BJ (cell line): ENCODE measurements at regions of chr6 and their contacts with region 1.

Region 1: GRCh38 chr6:122730775-122731386 is 48.6 kb upstream of the FABP7 start:
- DNase-seq: peak; percentile 1
- H3K4me3 ChIP-seq: no peak overlapping the region
- H3K27me3 ChIP-seq: no peaks in the 10 kb centered on the region
- CTCF ChIP-seq: peak; percentile 78

Region 2: DNA sequence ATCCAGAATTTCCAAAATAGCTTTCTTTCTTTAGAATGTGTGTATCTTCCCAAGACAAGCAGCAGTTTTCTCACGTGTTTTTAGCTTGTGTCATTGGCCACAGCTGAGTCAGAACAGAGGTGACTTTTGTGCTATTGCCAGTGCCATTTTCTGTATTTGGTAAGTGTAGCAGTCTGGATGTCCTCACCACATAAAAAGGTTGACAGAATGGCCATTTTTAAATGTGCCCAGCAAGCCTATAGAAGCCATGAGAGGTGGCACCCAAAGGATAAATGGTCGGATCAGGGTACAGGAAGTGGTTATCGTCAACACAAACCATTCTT is 600.9 kb before region 1 on chr6:
- CTCF ChIA-PET with region 1: no interaction called
- POLR2A ChIA-PET with region 1: no interaction called
- DNase-seq: no peak
- H3K4me3 ChIP-seq: no peak overlapping the region
- H3K27me3 ChIP-seq: no peaks in the 10 kb centered on the region
- CTCF ChIP-seq: no peak

Region 3: DNA sequence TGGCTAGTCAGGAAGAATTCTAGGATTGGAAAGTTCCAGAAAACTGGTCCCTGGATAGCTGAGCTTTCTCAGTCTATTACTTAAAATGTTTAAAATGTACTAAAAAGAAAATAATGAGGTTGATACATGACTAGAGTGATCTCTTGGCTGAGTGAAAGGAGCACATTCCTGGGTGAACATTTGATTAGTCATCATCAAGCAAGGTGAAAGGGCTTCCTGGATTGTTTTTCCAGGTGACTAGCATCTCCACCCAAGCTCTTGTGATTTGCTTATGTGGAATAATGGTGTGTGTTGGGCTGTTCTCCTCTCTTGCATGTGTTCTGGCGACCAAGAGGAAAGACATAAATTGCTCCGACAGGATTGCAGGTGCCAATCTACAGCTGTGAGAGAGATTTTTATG is 77.8 kb before region 1 on chr6:
- CTCF ChIA-PET with region 1: no interaction called
- POLR2A ChIA-PET with region 1: no interaction called
- DNase-seq: no peak
- H3K4me3 ChIP-seq: no peak overlapping the region
- H3K27me3 ChIP-seq: no peaks in the 10 kb centered on the region
- CTCF ChIP-seq: no peak

Region 4: GRCh38 chr6:122709922-122710512 is 20.9 kb before region 1 on chr6:
- CTCF ChIA-PET with region 1: interaction called, 16 read pairs
- POLR2A ChIA-PET with region 1: no interaction called
- DNase-seq: no peak
- H3K4me3 ChIP-seq: no peak overlapping the region
- H3K27me3 ChIP-seq: no peaks in the 10 kb centered on the region
- CTCF ChIP-seq: no peak

Region 5: DNA sequence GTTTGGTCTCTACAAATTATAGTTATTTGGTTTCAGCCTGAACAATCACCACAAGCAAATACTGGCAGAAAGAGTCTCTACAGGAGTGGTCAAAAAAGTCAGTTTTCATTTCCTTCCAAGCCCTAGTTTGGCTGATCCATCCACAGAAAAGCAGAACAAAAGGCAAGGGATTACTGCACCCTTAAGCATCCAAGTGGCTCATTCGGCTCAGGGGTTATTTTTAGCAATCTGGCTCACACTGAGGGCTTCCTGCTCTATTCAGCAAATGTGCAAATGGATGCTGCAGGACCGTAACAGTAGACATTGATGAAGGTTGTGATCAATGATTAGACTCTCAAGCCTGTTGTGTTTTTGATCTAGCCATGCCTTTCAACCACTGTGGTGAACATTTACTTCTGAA is 13.5 kb before region 1 on chr6:
- CTCF ChIA-PET with region 1: interaction called, 16 read pairs
- POLR2A ChIA-PET with region 1: no interaction called
- DNase-seq: no peak
- H3K4me3 ChIP-seq: no peak overlapping the region
- H3K27me3 ChIP-seq: no peaks in the 10 kb centered on the region
- CTCF ChIP-seq: no peak

Region 6: DNA sequence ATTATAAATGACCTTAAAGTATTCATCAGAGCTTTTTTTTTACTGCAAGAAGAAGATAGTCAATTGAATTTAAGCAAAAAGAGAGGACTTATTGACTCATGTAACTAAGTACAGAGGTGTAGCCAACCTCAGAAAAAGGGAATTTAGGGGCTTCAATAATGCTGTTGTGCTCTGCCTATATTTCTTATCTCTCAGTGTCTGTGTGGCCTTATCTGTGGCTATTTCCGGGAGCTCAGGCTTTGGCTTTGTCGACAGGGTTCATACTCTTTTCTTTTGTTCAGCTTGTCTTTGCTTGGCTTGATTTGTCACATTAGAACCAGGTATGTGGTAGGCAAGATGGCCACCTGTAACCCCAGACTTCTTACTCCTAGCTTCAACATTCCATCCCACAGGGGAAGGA is 10.1 kb after region 1 on chr6:
- CTCF ChIA-PET with region 1: interaction called, 24 read pairs
- POLR2A ChIA-PET with region 1: no interaction called
- DNase-seq: no peak
- H3K4me3 ChIP-seq: no peak overlapping the region
- H3K27me3 ChIP-seq: no peaks in the 10 kb centered on the region
- CTCF ChIP-seq: no peak

Region 7: DNA sequence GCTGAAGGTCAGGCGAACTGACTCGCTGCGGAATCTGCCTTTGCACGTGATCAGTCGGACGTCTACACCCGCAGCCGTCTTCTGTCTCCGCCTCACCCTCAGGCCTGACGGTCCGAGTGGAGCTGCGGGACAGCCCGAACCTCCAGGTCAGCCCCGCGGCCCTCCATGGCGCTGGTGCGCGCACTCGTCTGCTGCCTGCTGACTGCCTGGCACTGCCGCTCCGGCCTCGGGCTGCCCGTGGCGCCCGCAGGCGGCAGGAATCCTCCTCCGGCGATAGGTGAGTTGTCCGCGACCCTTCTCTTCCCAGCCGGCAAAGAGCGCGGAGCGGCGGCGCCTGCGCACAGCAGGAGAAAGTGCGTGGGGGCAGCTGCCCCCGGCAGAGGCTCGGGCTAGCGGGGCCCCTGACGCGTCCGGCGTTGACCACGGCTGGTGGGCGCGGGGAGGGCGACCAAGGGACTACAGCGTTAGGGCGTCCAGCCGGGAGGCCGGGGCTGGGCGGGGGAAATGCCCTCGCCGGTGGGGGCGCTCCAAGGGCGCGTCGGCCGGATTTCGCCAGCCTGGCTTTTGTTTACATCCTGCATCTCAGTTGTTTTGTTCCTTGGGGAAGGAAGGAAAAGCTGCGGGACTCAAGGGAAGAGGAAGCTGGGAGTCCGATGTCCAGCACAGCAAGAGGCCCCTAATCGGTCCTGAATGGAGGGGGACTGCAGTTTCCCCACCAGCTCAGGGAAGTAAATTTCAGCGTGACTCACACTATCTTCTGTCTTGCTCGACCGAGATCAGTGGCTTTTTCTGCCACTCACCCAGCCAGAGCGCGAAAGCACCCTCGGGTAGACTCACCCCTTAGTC is 58.5 kb after region 1 on chr6 and contains the start of gene SMPDL3A:
- CTCF ChIA-PET with region 1: interaction called, 11 read pairs
- POLR2A ChIA-PET with region 1: no interaction called
- DNase-seq: peak; percentile 16
- H3K4me3 ChIP-seq: peak within 1 kb of the TSS; percentile 80
- H3K27me3 ChIP-seq: no peaks in the 10 kb centered on the region; the same call in 1 of the 2 replicates
- CTCF ChIP-seq: peak; percentile 50
- polyA plus RNA-seq, gene SMPDL3A: 6.4 and 10.4 TPM in 2 replicates